CD8-positive, alpha-beta T cell (primary cell): ENCODE measurements at regions of chr20 and their contacts with region 1.

Region 1: GRCh38 chr20:34834459-34834893 is 9.0 kb upstream of the NCOA6 start:
- DNase-seq: peak in 2 of 9 experiments; percentile 41 to 59
- ATAC-seq: no peak
- H3K4me3 ChIP-seq: no peak overlapping the region
- H3K4me3 Mint-ChIP-seq: no peak overlapping the region
- H3K27ac ChIP-seq: no peak overlapping the region
- H3K27ac Mint-ChIP-seq: no peak overlapping the region
- H3K4me1 ChIP-seq: no peaks in the 10 kb centered on the region
- H3K4me1 Mint-ChIP-seq: peaks cover 2% of the 10 kb centered on the region
- H3K27me3 ChIP-seq: peaks cover 0 to 6% of the 10 kb centered on the region in 2 experiments
- H3K27me3 Mint-ChIP-seq: peaks cover 12% of the 10 kb centered on the region
- CTCF ChIP-seq: peak; percentile 66

Region 2: DNA sequence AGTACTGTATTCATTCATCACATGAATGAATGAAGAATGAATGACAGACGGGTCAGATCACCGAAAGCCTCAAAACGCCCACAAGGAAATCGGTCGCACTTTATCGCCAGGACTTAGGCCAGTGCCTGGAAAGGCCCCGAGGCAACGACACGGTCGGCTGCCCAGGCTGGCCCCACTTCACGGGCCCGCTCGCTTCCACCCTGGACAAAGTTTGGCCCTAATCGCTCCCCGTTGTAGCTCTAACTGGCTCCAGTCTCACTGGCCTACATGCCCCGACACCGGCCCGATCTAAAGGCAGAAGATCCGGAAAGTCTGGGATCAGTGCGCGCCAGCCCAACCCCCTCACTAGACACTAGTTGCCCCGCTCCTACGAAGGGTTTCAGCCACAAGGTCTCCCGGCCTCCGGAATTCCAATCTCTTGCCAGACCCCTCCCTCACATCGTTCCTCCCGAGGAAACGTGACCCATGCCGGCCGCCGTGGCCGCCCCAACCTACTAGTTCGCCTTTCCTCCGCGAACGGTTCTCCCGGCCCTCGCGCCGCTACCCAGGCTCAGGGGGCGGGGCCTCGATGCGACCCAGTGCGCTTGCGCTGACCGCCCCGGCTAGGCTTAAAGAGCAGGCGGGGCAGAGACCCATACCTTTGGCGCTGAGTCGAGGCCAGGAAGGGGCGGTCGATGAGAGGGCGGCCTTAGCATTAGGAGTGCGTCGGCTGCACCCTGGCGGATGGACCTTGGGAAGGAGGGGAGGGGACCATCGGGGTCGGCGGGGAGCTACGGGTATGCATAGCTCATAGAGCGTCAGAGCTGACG is 121.0 kb after region 1 on chr20 and contains the starts of genes GSS and MYH7B:
- CTCF ChIA-PET with region 1: interaction called, 5 read pairs
- POLR2A ChIA-PET with region 1: no interaction called
- intact Hi-C with region 1: loop called (anchors 1 kb)
- DNase-seq: peak; percentile 90 to 99 (median 96)
- ATAC-seq: peak; percentile 95
- H3K4me3 ChIP-seq: peak within 1 kb of the TSS; percentile 74 to 83
- H3K4me3 Mint-ChIP-seq: peak within 1 kb of the TSS; percentile 99
- H3K27ac ChIP-seq: peak within 1 kb of the TSS; percentile 64 to 84
- H3K27ac Mint-ChIP-seq: peak within 1 kb of the TSS; percentile 95
- H3K4me1 ChIP-seq: peaks cover 12% of the 10 kb centered on the region
- H3K4me1 Mint-ChIP-seq: peaks cover 32% of the 10 kb centered on the region
- H3K27me3 ChIP-seq: no peaks in the 10 kb centered on the region
- H3K27me3 Mint-ChIP-seq: no peaks in the 10 kb centered on the region
- CTCF ChIP-seq: no peak
- total RNA-seq, gene GSS: 23.6 to 24.3 TPM
- total RNA-seq, gene MYH7B: 0.19 to 0.54 TPM

Region 3: GRCh38 chr20:35207950-35208611 is 373.6 kb after region 1 on chr20:
- CTCF ChIA-PET with region 1: interaction called, 3 read pairs
- POLR2A ChIA-PET with region 1: no interaction called
- intact Hi-C with region 1: loop called (anchors 1 kb)
- DNase-seq: peak; percentile 54 to 87 (median 82)
- ATAC-seq: peak; percentile 86
- H3K4me3 ChIP-seq: no peak overlapping the region
- H3K4me3 Mint-ChIP-seq: no peak overlapping the region
- H3K27ac ChIP-seq: no peak overlapping the region
- H3K27ac Mint-ChIP-seq: no peak overlapping the region
- H3K4me1 ChIP-seq: no peaks in the 10 kb centered on the region
- H3K4me1 Mint-ChIP-seq: no peaks in the 10 kb centered on the region
- H3K27me3 ChIP-seq: no peaks in the 10 kb centered on the region
- H3K27me3 Mint-ChIP-seq: no peaks in the 10 kb centered on the region
- CTCF ChIP-seq: peak; percentile 77

Region 4: GRCh38 chr20:35269055-35269781 is 434.7 kb after region 1 on chr20:
- CTCF ChIA-PET with region 1: no interaction called
- POLR2A ChIA-PET with region 1: interaction called, 3 read pairs
- intact Hi-C with region 1: loop called in 1 of 2 experiments (anchors 1 kb)
- DNase-seq: peak in 8 of 9 experiments; percentile 16 to 69 (median 56)
- ATAC-seq: peak; percentile 79
- H3K4me3 ChIP-seq: no peak overlapping the region
- H3K4me3 Mint-ChIP-seq: no peak overlapping the region
- H3K27ac ChIP-seq: no peak overlapping the region
- H3K27ac Mint-ChIP-seq: no peak overlapping the region
- H3K4me1 ChIP-seq: no peaks in the 10 kb centered on the region
- H3K4me1 Mint-ChIP-seq: peaks cover 9% of the 10 kb centered on the region
- H3K27me3 ChIP-seq: no peaks in the 10 kb centered on the region
- H3K27me3 Mint-ChIP-seq: no peaks in the 10 kb centered on the region
- CTCF ChIP-seq: peak; percentile 60

Region 5: GRCh38 chr20:35303735-35304491 is 469.4 kb after region 1 on chr20:
- CTCF ChIA-PET with region 1: no interaction called
- POLR2A ChIA-PET with region 1: no interaction called
- intact Hi-C with region 1: loop called in 1 of 2 experiments (anchors 10 kb)
- DNase-seq: peak; percentile 62 to 90 (median 82)
- ATAC-seq: peak; percentile 95
- H3K4me3 ChIP-seq: no peak overlapping the region
- H3K4me3 Mint-ChIP-seq: no peak overlapping the region
- H3K27ac ChIP-seq: no peak overlapping the region
- H3K27ac Mint-ChIP-seq: no peak overlapping the region
- H3K4me1 ChIP-seq: peaks cover 4% of the 10 kb centered on the region
- H3K4me1 Mint-ChIP-seq: peaks cover 4% of the 10 kb centered on the region
- H3K27me3 ChIP-seq: no peaks in the 10 kb centered on the region
- H3K27me3 Mint-ChIP-seq: no peaks in the 10 kb centered on the region
- CTCF ChIP-seq: peak; percentile 85

Region 6: GRCh38 chr20:35447082-35447789 is 612.8 kb after region 1 on chr20:
- CTCF ChIA-PET with region 1: no interaction called
- POLR2A ChIA-PET with region 1: no interaction called
- intact Hi-C with region 1: loop called (anchors 2 to 10 kb)
- DNase-seq: peak; percentile 82 to 95 (median 86)
- ATAC-seq: peak; percentile 100
- H3K4me3 ChIP-seq: peak overlapping the region in 1 of 2 experiments; percentile 31
- H3K4me3 Mint-ChIP-seq: peak overlapping the region; percentile 89
- H3K27ac ChIP-seq: no peak overlapping the region
- H3K27ac Mint-ChIP-seq: no peak overlapping the region
- H3K4me1 ChIP-seq: no peaks in the 10 kb centered on the region
- H3K4me1 Mint-ChIP-seq: peaks cover 3% of the 10 kb centered on the region
- H3K27me3 ChIP-seq: no peaks in the 10 kb centered on the region
- H3K27me3 Mint-ChIP-seq: peaks cover 5% of the 10 kb centered on the region
- CTCF ChIP-seq: peak; percentile 87